Activated naive CD4-positive, alpha-beta T cell treated with anti-CD3 and anti-CD28 coated beads for 36 hours (primary cell): ENCODE measurements at regions of chr11 and their contacts with region 1.

Region 1: GRCh38 chr11:33015621-33016551 is at the start of gene DEPDC7:
- DNase-seq: peak; percentile 84
- H3K4me3 Mint-ChIP-seq: peak within 1 kb of the TSS; percentile 84
- H3K27ac Mint-ChIP-seq: no peak within 1 kb of the TSS
- H3K4me1 Mint-ChIP-seq: peaks cover 53% of the 10 kb centered on the region
- H3K27me3 Mint-ChIP-seq: peaks cover 9% of the 10 kb centered on the region
- total RNA-seq, gene DEPDC7: 2.2 to 2.5 TPM

Region 2: GRCh38 chr11:32583459-32584271 is 432.2 kb before region 1 on chr11 and contains the start of gene EIF3M:
- CTCF ChIA-PET with region 1: no interaction called
- intact Hi-C with region 1: loop called (anchors 10 kb)
- DNase-seq: peak; percentile 97
- H3K4me3 Mint-ChIP-seq: peak within 1 kb of the TSS; percentile 95
- H3K27ac Mint-ChIP-seq: peak within 1 kb of the TSS; percentile 94
- H3K4me1 Mint-ChIP-seq: peaks cover 38% of the 10 kb centered on the region
- H3K27me3 Mint-ChIP-seq: no peaks in the 10 kb centered on the region
- total RNA-seq, gene EIF3M: 342 to 358 TPM

Region 3: DNA sequence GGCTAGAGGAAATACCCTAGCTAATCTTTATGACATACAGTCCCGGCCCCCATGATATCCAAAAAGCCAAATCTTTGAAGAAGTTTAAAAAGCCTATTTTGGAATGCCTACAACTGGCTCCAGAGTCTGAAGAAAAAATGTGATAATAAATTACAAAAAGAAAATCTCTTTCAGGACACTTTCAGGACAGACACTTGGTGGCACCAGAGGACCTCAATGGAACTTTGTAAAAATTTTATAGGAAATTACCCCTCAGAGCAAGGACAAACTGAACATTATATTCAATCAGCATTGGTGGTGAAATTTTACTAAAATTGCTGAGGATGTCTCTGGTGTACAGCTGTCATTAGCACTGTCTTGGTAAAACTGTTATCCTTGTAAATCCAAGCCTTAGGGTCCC is 302.4 kb before region 1 on chr11:
- CTCF ChIA-PET with region 1: no interaction called
- intact Hi-C with region 1: no loop called
- DNase-seq: peak; percentile 23
- H3K4me3 Mint-ChIP-seq: no peak overlapping the region
- H3K27ac Mint-ChIP-seq: no peak overlapping the region
- H3K4me1 Mint-ChIP-seq: no peaks in the 10 kb centered on the region
- H3K27me3 Mint-ChIP-seq: peaks cover 22% of the 10 kb centered on the region

Region 4: DNA sequence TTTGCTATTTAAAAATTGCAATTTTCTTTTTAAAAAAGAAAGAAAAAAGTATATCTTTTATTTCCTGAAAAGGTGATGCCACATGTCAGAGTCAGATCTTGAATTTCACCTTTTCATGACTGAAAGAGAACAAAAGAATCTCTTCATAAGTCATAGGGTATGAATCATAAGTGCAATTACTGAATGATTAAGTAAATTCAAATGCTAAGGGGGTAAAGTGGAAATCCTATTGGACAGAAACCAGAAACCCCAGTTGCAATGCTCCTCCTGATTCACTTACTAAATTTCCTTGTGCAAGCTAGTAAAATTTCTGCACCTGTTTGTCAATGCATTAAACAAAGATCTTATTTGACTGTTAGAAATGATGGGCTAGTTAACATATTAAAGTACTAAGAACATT is 194.4 kb before region 1 on chr11:
- CTCF ChIA-PET with region 1: no interaction called
- intact Hi-C with region 1: loop called (anchors 1 kb)
- DNase-seq: peak; percentile 10
- H3K4me3 Mint-ChIP-seq: no peak overlapping the region
- H3K27ac Mint-ChIP-seq: peak overlapping the region; percentile 4
- H3K4me1 Mint-ChIP-seq: peaks cover 25% of the 10 kb centered on the region
- H3K27me3 Mint-ChIP-seq: no peaks in the 10 kb centered on the region

Region 5: DNA sequence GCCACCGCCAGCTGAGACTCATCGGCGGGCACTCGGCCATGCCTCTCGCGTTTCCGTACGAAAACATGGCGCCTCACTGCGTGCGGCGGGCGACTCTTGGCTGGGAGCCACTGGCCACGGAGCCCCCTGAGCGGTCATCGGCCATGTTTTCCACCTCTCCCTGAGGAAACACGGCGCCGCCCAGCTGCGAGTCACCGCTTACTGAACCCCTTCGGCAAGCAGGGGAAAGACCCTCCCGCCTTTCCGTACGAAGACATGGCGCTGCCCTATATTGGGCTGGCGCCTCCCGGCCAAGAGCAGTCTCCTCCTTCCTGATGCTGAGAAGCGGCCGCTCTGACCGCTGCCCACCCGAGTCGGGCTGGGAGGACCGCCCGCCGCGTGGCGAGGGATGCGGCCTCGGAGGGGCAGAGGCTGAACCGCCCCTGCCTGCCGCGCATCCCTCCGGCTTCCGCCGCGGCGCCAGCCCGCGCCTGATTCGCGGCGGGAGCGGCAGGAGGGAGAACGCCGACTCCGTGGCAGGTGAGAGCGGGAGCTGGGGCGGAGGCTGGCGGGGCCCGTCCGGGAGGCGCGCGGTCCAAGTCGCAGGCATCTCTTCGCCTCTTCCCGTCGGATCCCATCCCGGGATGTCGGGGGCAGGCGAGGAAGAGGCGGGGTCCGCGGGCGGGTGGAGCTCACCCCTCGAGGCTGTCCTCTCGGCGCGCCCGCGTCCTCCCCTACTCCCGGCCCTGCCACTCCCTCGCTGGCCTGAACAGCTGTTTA is 23.6 kb after region 1 on chr11 and contains the start of gene TCP11L1:
- CTCF ChIA-PET with region 1: interaction called, 5 read pairs
- intact Hi-C with region 1: loop called (anchors 1 kb)
- DNase-seq: peak; percentile 88
- H3K4me3 Mint-ChIP-seq: peak within 1 kb of the TSS; percentile 85
- H3K27ac Mint-ChIP-seq: peak within 1 kb of the TSS; percentile 92
- H3K4me1 Mint-ChIP-seq: peaks cover 25% of the 10 kb centered on the region
- H3K27me3 Mint-ChIP-seq: no peaks in the 10 kb centered on the region
- total RNA-seq, gene TCP11L1: 4.8 to 5.7 TPM

Region 6: GRCh38 chr11:33736148-33736809 is 720.4 kb after region 1 on chr11 and contains the start of gene CD59:
- CTCF ChIA-PET with region 1: no interaction called
- intact Hi-C with region 1: loop called (anchors 5 kb)
- DNase-seq: peak; percentile 95
- H3K4me3 Mint-ChIP-seq: peak within 1 kb of the TSS; percentile 78
- H3K27ac Mint-ChIP-seq: peak within 1 kb of the TSS; percentile 61
- H3K4me1 Mint-ChIP-seq: peaks cover 33% of the 10 kb centered on the region
- H3K27me3 Mint-ChIP-seq: no peaks in the 10 kb centered on the region
- total RNA-seq, gene CD59: 59.9 to 61.9 TPM

Region 7: DNA sequence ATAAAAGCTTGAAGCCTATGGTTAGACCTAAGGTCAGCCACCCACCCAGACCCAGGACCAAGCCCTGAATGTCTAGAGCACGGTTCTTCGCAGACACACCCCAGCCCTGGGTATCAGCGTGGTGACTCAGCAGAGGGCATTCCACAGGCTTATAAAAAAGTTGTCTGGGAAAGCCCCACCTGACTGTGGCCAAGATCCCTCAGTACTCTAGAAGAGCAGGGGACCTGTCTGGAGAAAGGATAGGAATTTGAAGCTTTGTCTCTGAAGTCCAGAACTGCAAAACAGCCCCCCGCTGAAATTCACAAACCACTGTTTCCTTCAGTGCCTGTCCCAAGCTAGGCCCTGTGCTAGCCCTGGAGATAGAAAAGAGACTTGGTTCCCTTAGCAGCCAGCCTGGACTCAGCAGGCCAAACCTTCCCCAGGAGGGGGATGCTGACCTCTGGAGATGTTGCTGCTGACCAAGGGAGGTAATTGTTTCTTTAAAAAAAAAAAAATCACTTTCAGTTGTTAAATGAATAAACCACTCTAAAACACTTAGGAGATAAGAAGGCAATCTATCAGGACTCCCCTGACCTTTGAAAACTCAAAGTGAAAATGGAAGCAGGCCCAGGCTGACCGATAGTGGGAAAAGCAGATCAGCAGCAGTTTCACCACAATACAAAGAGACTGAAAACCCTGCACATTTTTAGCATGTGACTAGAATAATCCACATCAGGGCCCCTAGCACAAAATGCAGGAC is 1228.0 kb after region 1 on chr11:
- CTCF ChIA-PET with region 1: no interaction called
- intact Hi-C with region 1: loop called (anchors 10 kb)
- DNase-seq: peak; percentile 77
- H3K4me3 Mint-ChIP-seq: no peak overlapping the region
- H3K27ac Mint-ChIP-seq: peak overlapping the region; percentile 46
- H3K4me1 Mint-ChIP-seq: peaks cover 78% of the 10 kb centered on the region
- H3K27me3 Mint-ChIP-seq: peaks cover 2% of the 10 kb centered on the region